ENCODE measurements at regions of chr7 and their contacts with region 1.

Region 1: DNA sequence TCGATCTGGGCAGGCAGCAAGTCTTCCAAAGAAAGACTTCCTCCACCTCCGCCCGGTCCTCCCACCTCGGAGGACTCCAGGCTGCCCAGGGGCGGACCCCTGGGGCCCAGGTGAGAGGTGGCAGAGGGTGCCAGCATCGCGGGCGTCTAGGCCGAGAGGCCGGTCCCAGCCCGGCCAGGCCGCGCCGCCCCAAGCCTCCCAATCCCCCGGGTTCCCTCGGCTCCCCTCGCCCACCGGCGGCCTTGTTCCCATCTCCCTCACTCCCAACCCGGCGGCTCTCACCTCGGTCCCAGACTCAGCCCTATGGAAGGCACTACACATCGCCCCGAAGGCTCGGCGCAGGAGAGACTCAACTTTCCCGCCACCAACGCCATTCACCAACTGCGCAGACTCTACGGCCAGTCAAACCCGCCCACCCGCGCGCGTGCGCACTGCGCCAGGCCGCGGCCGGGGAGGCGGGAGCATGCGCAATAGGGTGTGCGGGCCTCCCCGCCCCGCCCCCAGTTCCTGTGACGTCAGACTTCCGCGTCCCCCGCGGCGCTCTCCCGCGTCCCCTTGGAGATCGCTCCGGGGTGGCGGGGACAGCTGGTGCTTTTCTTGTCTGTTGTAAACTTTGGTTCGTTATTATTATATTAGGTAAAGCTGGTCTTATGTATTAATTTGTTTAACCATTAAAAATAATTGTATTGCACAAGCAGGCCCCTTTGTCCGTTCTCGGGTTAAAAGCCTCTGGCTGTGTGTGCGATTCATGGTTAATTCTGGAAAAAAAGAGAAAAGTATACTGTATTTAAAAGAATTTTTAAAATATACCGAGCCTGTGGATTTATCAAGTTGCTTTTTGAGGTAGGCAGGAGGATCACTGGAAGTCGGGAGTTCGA is at the start of gene XRCC2:
- DNase-seq: peak; percentile 96
- total RNA-seq, gene XRCC2: 0.24 TPM

Region 2: GRCh38 chr7:152313831-152314604 is 362.0 kb before region 1 on chr7:
- intact Hi-C with region 1: no loop called
- DNase-seq: no peak

Region 3: GRCh38 chr7:152759949-152760853 is 84.2 kb after region 1 on chr7:
- intact Hi-C with region 1: loop called (anchors 5 kb)
- DNase-seq: no peak

Measured in cardiac septum (tissue), 1 donor.